H1 (cell line): ENCODE measurements at regions of chr22 and their contacts with region 1.

Region 1: DNA sequence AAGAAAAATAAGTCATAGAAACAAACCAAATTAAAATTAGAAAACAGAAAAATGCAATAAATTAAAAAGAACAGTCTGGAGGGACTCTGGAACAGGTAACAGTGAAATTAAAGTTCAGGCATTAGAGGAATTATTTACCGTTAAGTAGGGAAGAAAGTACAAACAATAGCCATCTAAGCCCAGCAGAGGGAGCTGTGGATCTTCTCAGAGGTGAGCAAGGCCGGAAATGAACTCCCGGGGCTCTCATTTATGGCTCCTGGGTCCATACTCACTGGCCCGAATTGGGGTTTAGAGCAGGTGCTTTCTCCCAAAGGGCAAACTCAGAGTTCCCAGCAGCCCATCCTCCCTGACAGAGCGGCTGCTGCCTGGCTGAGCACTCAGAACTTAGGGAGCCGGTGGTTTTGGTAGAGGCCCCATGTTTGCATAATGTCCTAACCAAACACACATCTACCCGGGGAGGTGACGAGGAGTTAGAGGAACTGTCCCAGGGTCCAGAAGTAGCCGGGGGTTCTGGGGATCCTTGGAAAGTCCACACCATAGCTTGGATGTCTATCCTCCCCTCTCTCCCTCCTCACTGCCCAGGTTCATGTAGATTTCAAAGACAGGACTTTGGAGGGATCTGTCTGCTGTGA is 87.8 kb upstream of the VPREB1 start:
- DNase-seq: peak; percentile 21 to 69
- H3K4me3 ChIP-seq: no peak overlapping the region
- H3K27ac ChIP-seq: no peak overlapping the region
- H3K4me1 ChIP-seq: no peaks in the 10 kb centered on the region
- H3K27me3 ChIP-seq: peaks cover 60 to 79% (median 73%) of the 10 kb centered on the region in 4 experiments
- CTCF ChIP-seq: peak; percentile 46 to 71 (median 70)
- EP300 ChIP-seq: no peak
- POLR2A ChIP-seq: no peak
- RAD21 ChIP-seq: peak; percentile 69 to 71

Region 2: GRCh38 chr22:22168190-22168940 is 11.5 kb after region 1 on chr22:
- CTCF ChIA-PET with region 1: interaction called, 16 read pairs
- POLR2A ChIA-PET with region 1: interaction called, 4 read pairs
- DNase-seq: no peak
- H3K4me3 ChIP-seq: peak overlapping the region in 2 of 4 experiments; percentile 10 to 39; a peak in 2 of 8 replicates
- H3K27ac ChIP-seq: no peak overlapping the region
- H3K4me1 ChIP-seq: no peaks in the 10 kb centered on the region
- H3K27me3 ChIP-seq: peaks cover 70 to 94% (median 90%) of the 10 kb centered on the region in 4 experiments
- CTCF ChIP-seq: no peak
- EP300 ChIP-seq: no peak
- POLR2A ChIP-seq: no peak
- RAD21 ChIP-seq: no peak